ENCODE measurements at regions of chr3 and their contacts with region 1.

Region 1: GRCh38 chr3:150220799-150221198 is 187.3 kb upstream of the TSC22D2 start:
- DNase-seq: no peak
- H3K4me3 Mint-ChIP-seq: peak overlapping the region; percentile 62
- H3K27ac Mint-ChIP-seq: no peak overlapping the region
- H3K4me1 Mint-ChIP-seq: peaks cover 13% of the 10 kb centered on the region
- H3K27me3 Mint-ChIP-seq: peaks cover 56% of the 10 kb centered on the region
- CTCF ChIP-seq: no peak

Region 2: GRCh38 chr3:149936812-149937233 is 284.0 kb before region 1 on chr3:
- CTCF ChIA-PET with region 1: no interaction called
- intact Hi-C with region 1: loop called (anchors 1 kb)
- DNase-seq: peak; percentile 68
- H3K4me3 Mint-ChIP-seq: no peak overlapping the region
- H3K27ac Mint-ChIP-seq: no peak overlapping the region
- H3K4me1 Mint-ChIP-seq: no peaks in the 10 kb centered on the region
- H3K27me3 Mint-ChIP-seq: no peaks in the 10 kb centered on the region
- CTCF ChIP-seq: peak; percentile 88

Region 3: DNA sequence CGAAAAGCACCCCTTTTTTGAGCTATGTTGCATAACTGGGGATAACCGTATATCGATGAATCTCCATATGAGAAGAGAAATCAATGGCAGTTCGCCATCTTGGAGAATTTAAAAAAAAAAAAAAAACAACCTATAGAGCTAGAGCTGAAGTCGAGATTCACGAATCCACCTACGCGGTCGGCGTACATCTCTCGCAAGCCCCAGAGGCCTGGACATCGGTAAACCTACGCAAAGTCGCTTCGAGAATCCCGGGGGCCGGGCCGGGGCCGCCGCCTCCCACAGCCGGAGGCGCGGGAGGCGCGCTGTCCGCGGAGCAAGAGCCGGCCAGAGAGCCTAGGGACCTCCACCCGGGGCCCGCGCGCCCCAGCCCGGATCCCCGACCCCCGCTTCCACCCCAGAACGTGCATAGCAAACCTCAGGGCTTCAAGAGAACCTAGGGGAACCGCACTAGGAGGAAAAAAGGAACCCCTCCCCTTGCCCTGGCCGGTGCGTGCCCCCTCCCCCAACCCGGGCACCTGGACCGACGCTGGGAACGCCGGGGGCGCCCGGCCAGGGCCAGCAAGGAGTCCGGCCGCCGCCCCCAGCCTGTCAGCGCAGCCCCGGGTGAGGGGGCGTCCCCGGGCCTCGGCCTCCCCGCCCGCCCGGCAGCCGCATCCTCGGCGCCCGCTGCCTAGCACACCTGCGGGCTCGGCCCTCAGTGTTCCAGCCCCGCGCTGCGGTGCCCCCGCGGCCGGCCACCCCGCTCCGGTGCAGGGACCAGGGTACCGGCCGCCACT is 250.7 kb before region 1 on chr3:
- CTCF ChIA-PET with region 1: interaction called, 3 read pairs
- intact Hi-C with region 1: loop called (anchors 1 kb)
- DNase-seq: peak; percentile 91
- H3K4me3 Mint-ChIP-seq: peak overlapping the region; percentile 80
- H3K27ac Mint-ChIP-seq: peak overlapping the region; percentile 87
- H3K4me1 Mint-ChIP-seq: peaks cover 32% of the 10 kb centered on the region
- H3K27me3 Mint-ChIP-seq: no peaks in the 10 kb centered on the region
- CTCF ChIP-seq: no peak

Region 4: GRCh38 chr3:150061288-150062024 is 159.3 kb before region 1 on chr3:
- CTCF ChIA-PET with region 1: interaction called, 10 read pairs
- intact Hi-C with region 1: no loop called
- DNase-seq: no peak
- H3K4me3 Mint-ChIP-seq: no peak overlapping the region
- H3K27ac Mint-ChIP-seq: no peak overlapping the region
- H3K4me1 Mint-ChIP-seq: no peaks in the 10 kb centered on the region
- H3K27me3 Mint-ChIP-seq: peaks cover 75% of the 10 kb centered on the region
- CTCF ChIP-seq: no peak

Region 5: GRCh38 chr3:150177673-150178381 is 43.0 kb before region 1 on chr3:
- CTCF ChIA-PET with region 1: no interaction called
- intact Hi-C with region 1: no loop called
- DNase-seq: no peak
- H3K4me3 Mint-ChIP-seq: no peak overlapping the region
- H3K27ac Mint-ChIP-seq: no peak overlapping the region
- H3K4me1 Mint-ChIP-seq: peaks cover 17% of the 10 kb centered on the region
- H3K27me3 Mint-ChIP-seq: peaks cover 7% of the 10 kb centered on the region
- CTCF ChIP-seq: no peak

Region 6: DNA sequence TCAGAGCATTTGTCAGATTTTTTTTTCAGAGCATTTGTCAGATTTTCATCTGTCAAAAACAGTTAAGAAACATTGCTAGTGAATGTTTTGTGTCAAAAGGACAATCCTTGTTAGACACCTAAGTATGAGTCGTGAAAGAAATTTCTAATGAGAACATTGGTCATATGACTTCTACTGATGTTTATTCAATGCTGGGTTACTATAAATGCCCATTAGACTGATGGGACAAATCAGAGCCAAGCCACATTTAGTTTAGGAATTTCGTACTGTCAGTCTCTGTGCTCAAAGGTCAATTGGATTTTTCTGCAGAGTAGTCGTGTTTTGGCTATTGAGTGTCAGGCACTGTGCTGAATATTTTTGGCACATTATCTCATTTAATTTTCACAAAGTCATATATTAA is 218.9 kb after region 1 on chr3:
- CTCF ChIA-PET with region 1: no interaction called
- intact Hi-C with region 1: no loop called
- DNase-seq: no peak
- H3K4me3 Mint-ChIP-seq: no peak overlapping the region
- H3K27ac Mint-ChIP-seq: no peak overlapping the region
- H3K4me1 Mint-ChIP-seq: peaks cover 46% of the 10 kb centered on the region
- H3K27me3 Mint-ChIP-seq: no peaks in the 10 kb centered on the region
- CTCF ChIP-seq: no peak

Measured in Calu3 (cell line).